Activated T-helper 1 cell treated with anti-CD3 and anti-CD28 coated beads, Interleukin-12 subunit alpha, Interleukin-12 subunit beta, Interleukin-2, Interleukin-4 antibody, amounts not matched to agents 30 ng/mL and 10 ng/mL and 1 ng/mL, durations not matched to agents 14 hours and 24 hours and 36 hours (primary cell): ENCODE measurements at regions of chr14 and their contacts with region 1.

Region 1: GRCh38 chr14:100192672-100193416 is 33.4 kb upstream of the DEGS2 start:
- DNase-seq: peak; percentile 100
- H3K4me3 Mint-ChIP-seq: peak overlapping the region; percentile 60
- H3K27ac Mint-ChIP-seq: peak overlapping the region; percentile 67
- H3K4me1 Mint-ChIP-seq: peaks cover 6% of the 10 kb centered on the region
- H3K27me3 Mint-ChIP-seq: no peaks in the 10 kb centered on the region

Region 2: GRCh38 chr14:99518441-99519346 is 674.1 kb before region 1 on chr14:
- intact Hi-C with region 1: no loop called
- DNase-seq: peak; percentile 71
- H3K4me3 Mint-ChIP-seq: no peak overlapping the region
- H3K27ac Mint-ChIP-seq: no peak overlapping the region
- H3K4me1 Mint-ChIP-seq: no peaks in the 10 kb centered on the region
- H3K27me3 Mint-ChIP-seq: no peaks in the 10 kb centered on the region

Region 3: DNA sequence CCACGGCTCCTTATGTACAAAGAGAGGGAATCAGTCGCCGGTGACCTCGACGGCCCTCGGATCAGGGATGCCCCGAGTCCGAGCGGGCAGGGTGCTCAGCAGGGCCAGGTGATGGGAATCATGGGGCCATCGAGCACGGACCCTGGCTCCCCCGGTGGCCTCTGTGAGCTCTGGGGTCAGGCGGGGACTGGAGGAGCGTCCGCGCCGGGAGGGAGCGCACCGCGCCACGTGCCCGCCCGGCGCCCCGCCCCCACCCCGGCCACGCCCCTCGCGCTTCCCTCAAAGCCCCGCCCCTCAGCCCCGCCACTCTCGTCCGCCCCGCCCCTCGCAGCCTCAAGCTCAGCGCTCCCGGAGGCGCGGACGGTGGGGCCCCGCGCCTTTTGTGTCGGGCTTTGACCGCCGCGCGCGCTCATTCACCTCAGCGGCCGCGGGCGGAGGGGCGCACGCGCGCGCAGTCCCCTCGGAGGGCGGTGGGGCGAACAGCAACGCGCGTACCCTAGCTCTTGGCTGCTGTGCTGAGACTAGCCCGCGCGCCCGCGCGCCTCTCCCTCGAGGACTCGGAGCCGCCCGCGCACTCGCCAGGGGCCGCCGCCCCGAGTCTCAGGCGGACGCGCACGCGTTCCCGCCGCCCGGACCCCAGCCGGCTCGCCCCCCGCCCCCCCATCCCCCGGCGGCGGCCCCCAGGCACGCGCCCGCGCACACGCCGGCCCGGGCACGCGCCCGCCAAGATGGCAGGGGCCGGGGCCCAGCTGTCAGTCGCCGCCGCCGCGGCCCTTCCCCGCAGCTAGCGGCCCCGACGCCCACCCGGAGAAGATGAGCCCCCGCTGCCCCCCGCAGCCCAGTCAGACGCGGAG is 221.5 kb before region 1 on chr14:
- intact Hi-C with region 1: loop called (anchors 1 kb)
- DNase-seq: peak; percentile 68
- H3K4me3 Mint-ChIP-seq: peak overlapping the region; percentile 80
- H3K27ac Mint-ChIP-seq: no peak overlapping the region
- H3K4me1 Mint-ChIP-seq: peaks cover 13% of the 10 kb centered on the region
- H3K27me3 Mint-ChIP-seq: peaks cover 21% of the 10 kb centered on the region

Region 4: GRCh38 chr14:100012402-100013327 is 180.2 kb before region 1 on chr14:
- intact Hi-C with region 1: no loop called
- DNase-seq: no peak
- H3K4me3 Mint-ChIP-seq: no peak overlapping the region
- H3K27ac Mint-ChIP-seq: no peak overlapping the region
- H3K4me1 Mint-ChIP-seq: peaks cover 9% of the 10 kb centered on the region
- H3K27me3 Mint-ChIP-seq: peaks cover 8% of the 10 kb centered on the region

Region 5: DNA sequence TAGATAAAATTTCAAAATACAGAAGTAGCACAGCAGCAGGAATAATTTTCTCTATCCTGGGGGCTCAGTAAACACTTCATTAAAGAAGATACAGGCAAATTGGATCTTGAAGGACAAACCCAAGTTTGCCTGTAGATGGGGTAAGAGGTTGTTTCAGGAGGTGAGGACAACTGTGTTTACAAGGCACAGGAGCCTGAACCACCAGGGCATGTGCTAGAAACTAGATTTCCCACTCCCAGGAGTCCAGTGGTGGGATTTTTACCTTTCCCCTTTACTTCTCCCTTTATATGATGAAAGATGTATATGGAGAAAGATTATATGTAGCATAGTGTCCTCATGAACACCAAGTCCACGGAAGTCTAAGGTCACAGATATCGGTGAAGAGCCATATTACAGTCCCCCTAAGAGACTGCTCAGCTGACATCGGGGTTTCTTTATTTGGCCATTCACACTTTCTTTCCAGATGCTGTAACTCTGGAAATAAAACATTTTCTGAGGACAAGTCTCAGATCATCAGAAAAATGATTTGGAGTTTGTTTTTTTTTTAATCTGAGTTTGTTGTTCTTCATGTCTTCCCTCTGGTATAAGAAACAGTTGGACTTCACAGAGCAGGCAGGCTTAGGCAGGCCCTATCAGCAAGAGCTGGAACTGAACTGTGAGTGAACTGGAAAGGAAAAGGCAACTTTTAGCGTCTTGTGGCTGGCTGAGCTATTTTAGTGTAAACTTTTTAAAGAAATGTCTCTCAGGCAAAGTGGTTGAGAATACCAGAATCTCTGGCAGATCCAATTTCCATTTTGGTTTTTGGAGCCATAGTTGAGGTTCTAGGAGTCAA is 135.7 kb before region 1 on chr14:
- intact Hi-C with region 1: loop called (anchors 1 kb)
- DNase-seq: no peak
- H3K4me3 Mint-ChIP-seq: peak overlapping the region; percentile 62
- H3K27ac Mint-ChIP-seq: peak overlapping the region; percentile 75
- H3K4me1 Mint-ChIP-seq: peaks cover 69% of the 10 kb centered on the region
- H3K27me3 Mint-ChIP-seq: no peaks in the 10 kb centered on the region

Region 6: DNA sequence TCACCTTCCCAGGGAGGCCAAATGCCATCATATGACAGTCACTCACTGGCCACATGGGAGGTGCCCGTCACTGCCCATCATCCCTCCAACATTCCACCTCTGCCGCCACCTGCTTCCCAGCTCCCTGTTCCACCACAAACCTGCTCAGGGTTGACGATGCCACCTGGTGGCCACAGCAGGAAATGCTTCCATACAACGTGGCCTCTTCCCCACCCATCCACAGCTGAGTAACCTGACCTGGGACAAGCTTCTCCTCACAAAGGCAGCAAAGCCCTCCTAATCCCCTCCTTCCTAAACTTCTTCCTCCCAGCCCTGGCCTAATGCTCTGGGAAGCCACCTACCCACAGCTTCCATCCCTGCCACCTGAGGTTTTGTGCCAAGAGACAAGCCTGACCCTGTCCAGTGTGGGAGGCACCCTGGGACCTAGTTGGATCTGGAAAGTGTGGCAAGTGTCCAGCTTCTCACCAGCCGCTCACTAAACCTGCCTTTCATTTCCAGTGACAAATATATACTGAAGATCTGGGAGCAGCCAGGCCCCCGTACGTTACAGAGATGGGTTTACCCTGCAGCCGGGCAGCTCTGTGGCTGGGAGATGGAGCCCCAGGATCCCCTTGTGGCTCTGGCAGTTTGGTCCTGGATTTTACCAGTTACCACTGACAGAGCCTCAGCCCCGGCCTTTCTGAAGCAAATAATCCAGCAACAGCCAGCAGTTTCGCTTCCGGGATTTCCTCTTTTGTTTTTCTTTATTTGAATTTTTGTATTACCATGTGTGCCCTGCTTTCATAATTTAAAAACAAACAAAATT is 37.6 kb before region 1 on chr14:
- intact Hi-C with region 1: loop called (anchors 1 kb)
- DNase-seq: no peak
- H3K4me3 Mint-ChIP-seq: no peak overlapping the region
- H3K27ac Mint-ChIP-seq: no peak overlapping the region
- H3K4me1 Mint-ChIP-seq: no peaks in the 10 kb centered on the region
- H3K27me3 Mint-ChIP-seq: peaks cover 22% of the 10 kb centered on the region

Region 7: GRCh38 chr14:100239840-100240724 is 47.2 kb after region 1 on chr14:
- intact Hi-C with region 1: loop called (anchors 1 kb)
- DNase-seq: peak; percentile 83
- H3K4me3 Mint-ChIP-seq: peak overlapping the region; percentile 92
- H3K27ac Mint-ChIP-seq: peak overlapping the region; percentile 90
- H3K4me1 Mint-ChIP-seq: peaks cover 54% of the 10 kb centered on the region
- H3K27me3 Mint-ChIP-seq: no peaks in the 10 kb centered on the region

Region 8: DNA sequence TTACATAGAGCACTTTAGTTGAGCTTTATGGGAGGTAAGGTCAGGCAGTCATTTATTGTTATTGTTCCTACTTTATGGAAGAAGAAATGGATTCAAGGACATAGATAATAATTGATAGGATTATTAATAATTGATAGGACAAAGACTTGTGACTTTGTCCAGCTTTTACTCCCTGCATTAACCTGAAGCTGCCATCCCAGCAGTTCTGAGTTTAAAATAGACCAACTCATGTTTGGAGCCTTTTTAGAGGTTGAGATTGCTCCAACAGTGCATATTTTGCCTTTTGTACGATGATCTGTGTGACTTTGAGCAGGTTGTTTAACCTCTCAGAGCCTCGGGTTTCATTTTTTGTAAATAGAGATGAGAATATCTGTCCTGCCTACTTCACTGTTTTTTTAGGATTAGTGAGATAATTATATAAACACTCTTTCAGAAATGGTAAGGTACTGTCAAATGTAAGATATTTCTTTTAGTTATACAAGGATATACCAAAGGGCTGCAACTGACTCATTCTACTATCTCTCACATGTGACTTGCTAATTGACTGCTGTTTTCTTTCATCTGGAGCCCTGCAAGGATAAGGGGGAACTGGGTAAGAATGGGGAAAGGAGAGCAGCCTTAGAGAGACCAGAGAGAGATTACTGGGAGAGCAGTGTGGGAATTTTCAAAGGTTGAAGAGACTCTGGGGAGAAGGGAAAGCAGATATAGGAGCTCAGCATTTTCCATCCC is 1962.1 kb after region 1 on chr14:
- intact Hi-C with region 1: no loop called
- DNase-seq: no peak
- H3K4me3 Mint-ChIP-seq: no peak overlapping the region
- H3K27ac Mint-ChIP-seq: peak overlapping the region; percentile 21
- H3K4me1 Mint-ChIP-seq: peaks cover 5% of the 10 kb centered on the region
- H3K27me3 Mint-ChIP-seq: no peaks in the 10 kb centered on the region